AG04450 (cell line): ENCODE measurements at regions of chr20 and their contacts with region 1.

Region 1: GRCh38 chr20:8722276-8722928 is 346.5 kb upstream of the PLCB4 start:
- DNase-seq: peak; percentile 65
- H3K4me3 ChIP-seq: no peak overlapping the region
- H3K27ac ChIP-seq: no peak overlapping the region
- H3K27me3 ChIP-seq: no peaks in the 10 kb centered on the region
- CTCF ChIP-seq: peak; percentile 83

Region 2: GRCh38 chr20:6767536-6768227 is 1954.7 kb before region 1 on chr20 and contains the start of gene BMP2:
- CTCF ChIA-PET with region 1: interaction called, 14 read pairs
- POLR2A ChIA-PET with region 1: no interaction called
- DNase-seq: no peak
- H3K4me3 ChIP-seq: peak within 1 kb of the TSS; percentile 64
- H3K27ac ChIP-seq: no peak within 1 kb of the TSS
- H3K27me3 ChIP-seq: peaks cover 22% of the 10 kb centered on the region
- CTCF ChIP-seq: no peak
- polyA plus RNA-seq, gene BMP2: 1.6 and 1.8 TPM in 2 replicates

Region 3: DNA sequence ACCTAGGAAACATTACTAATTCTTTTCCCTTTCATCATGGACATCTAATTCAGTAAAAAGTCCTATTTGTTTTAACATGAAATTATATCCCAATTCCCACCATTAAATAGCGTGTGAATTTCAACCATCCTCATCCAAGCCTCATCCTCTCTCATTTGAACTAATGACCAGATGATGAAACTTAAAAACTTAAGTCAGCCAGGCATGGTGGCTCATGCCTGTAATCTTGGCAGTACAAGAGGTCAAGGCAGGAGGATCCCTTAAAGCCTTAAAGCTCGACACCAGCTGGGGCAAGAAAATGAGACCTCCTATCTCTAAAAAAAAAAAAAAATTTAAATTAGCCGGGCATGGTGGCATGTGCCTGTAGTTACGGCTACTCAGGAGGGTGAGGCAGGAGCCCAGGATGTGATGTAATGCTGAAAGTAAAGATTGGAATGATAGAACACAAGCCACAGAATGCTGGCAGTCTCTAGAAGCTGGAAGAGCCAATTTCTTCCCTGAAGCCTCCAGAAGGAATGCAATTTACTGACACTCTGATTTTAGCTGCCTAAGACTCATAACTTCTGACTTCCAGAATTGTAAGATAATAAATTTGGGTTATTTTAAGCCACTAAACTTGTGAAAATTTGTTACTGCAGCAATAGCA is 755.1 kb before region 1 on chr20:
- CTCF ChIA-PET with region 1: interaction called, 38 read pairs
- POLR2A ChIA-PET with region 1: no interaction called
- DNase-seq: no peak
- H3K4me3 ChIP-seq: no peak overlapping the region
- H3K27ac ChIP-seq: no peak overlapping the region
- H3K27me3 ChIP-seq: peaks cover 3% of the 10 kb centered on the region
- CTCF ChIP-seq: no peak

Region 4: DNA sequence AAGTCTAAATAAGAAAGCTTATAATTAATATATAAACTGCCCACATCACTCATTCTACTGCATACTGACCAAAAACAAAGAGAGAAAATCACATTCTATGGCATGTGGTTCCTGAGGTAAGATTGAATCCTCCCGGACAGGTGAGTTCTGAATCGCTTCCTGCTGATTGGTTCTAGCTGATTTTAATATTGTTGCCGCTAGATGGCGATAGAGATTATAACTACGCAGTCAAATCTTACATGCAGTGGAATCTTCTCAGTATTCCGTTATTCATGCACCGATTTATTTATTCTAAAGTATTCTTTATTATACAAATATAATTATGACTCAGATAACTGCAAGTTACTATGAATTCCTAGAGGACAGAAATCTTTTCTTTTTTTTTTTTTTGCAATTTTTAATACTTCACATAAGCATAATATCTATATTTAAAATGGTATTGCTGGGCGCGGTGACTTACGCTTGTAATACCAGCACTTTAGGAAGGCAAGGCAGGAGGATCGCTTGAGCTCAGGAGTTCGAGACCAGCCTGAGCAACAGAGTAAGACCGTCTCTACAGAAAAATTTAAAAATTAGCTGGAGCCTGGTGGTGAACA is 678.6 kb before region 1 on chr20:
- CTCF ChIA-PET with region 1: interaction called, 384 read pairs
- POLR2A ChIA-PET with region 1: interaction called, 3 read pairs
- DNase-seq: no peak
- H3K4me3 ChIP-seq: no peak overlapping the region
- H3K27ac ChIP-seq: no peak overlapping the region
- H3K27me3 ChIP-seq: no peaks in the 10 kb centered on the region
- CTCF ChIP-seq: peak; percentile 69

Region 5: DNA sequence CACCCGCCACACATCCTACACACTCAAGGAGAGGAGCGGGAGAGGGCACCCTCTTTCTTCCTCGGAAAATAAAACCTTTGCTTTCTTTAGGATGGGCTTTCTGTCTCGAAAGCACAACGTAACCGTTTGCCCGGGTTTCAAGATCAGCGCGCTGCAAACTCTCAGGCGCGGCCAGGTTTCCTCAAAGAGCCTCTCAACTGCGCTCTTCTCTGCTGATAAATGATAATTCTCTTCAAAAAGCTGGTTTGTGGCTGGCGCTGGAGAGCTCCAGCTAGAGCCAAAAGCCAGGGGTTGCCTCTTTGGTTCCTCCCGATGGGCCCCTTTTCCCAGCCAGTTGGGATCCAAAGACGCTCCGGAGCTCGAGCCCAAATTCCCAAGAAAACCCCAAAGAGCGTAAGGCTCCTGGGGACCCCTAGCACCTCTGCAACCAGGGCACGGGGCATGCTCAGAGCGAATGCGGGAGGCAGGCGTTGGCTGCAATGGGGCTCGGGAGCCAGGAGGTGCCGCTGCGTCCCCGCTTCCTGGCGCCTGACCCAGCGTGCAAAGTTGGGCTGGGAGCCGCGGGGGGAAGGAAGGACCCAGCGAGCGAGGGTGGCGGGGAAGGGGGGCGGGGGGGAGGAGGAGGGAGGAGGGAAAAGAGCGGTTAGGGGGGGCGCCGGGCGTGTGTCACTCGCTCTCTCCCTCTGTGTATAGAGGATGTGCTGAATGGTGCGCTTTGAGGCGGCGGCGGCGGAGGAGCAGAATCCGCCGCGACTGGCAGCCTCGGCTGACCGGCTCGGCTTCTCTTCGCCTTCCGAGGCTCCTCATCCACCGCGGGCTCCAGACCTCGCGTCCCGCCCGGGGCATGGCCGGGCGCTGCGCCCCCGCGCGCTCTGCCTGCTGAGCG is 590.6 kb before region 1 on chr20 and contains the start of gene PLCB1:
- CTCF ChIA-PET with region 1: interaction called, 65 read pairs
- POLR2A ChIA-PET with region 1: interaction called, 3 read pairs
- DNase-seq: peak; percentile 66
- H3K4me3 ChIP-seq: peak within 1 kb of the TSS; percentile 75
- H3K27ac ChIP-seq: peak within 1 kb of the TSS; percentile 58
- H3K27me3 ChIP-seq: no peaks in the 10 kb centered on the region
- CTCF ChIP-seq: peak; percentile 94
- polyA plus RNA-seq, gene PLCB1: 12.3 and 16.4 TPM in 2 replicates

Region 6: GRCh38 chr20:8399947-8400346 is 322.5 kb before region 1 on chr20:
- CTCF ChIA-PET with region 1: interaction called, 15 read pairs
- POLR2A ChIA-PET with region 1: no interaction called
- DNase-seq: no peak
- H3K4me3 ChIP-seq: no peak overlapping the region
- H3K27ac ChIP-seq: no peak overlapping the region
- H3K27me3 ChIP-seq: no peaks in the 10 kb centered on the region
- CTCF ChIP-seq: no peak

Region 7: GRCh38 chr20:8557711-8558110 is 164.7 kb before region 1 on chr20:
- CTCF ChIA-PET with region 1: no interaction called
- POLR2A ChIA-PET with region 1: no interaction called
- DNase-seq: no peak
- H3K4me3 ChIP-seq: no peak overlapping the region
- H3K27ac ChIP-seq: no peak overlapping the region
- H3K27me3 ChIP-seq: no peaks in the 10 kb centered on the region
- CTCF ChIP-seq: no peak

Region 8: DNA sequence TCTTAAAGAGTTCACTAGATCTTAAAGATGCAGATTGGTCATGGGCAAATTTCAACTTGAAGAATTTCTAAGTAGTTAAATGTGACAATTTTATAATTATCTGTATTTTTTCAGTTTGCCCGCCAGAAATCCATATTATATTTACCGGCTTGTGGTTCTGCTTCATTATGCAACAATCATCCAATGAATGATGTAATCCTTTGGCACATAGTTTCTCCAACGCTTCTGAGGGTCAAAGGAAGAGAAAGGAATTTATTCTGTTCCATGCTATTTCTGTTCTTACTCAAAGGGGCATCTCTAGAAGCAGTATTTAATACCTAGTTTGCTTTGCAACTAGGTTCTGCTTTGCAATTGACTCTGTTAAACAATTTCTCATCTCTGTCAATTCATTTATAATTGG is 12.8 kb before region 1 on chr20:
- CTCF ChIA-PET with region 1: interaction called, 33 read pairs
- POLR2A ChIA-PET with region 1: no interaction called
- DNase-seq: no peak
- H3K4me3 ChIP-seq: no peak overlapping the region
- H3K27ac ChIP-seq: no peak overlapping the region
- H3K27me3 ChIP-seq: no peaks in the 10 kb centered on the region
- CTCF ChIP-seq: no peak

Region 9: DNA sequence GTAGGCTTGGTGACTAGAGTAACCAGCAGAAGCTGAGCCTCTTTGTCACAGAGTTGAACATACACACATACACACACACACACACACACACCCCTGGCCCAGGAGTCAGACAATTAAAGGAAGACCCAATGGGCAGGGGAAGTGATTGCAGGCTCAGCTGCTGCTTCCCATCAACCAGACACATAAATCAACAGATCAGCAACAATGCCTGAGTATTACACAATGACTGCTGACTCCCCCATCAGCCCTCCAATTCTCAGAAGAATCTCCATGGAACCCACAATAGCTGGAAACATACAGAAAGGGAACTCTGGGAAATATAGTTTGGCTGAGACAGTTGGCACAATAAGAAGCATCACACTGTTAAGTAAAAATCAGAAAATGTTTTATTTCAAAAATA is 76.1 kb after region 1 on chr20:
- CTCF ChIA-PET with region 1: no interaction called
- POLR2A ChIA-PET with region 1: no interaction called
- DNase-seq: no peak
- H3K4me3 ChIP-seq: no peak overlapping the region
- H3K27ac ChIP-seq: no peak overlapping the region
- H3K27me3 ChIP-seq: no peaks in the 10 kb centered on the region
- CTCF ChIP-seq: no peak